ENCODE measurements at regions of chr16 and their contacts with region 1.

Region 1: DNA sequence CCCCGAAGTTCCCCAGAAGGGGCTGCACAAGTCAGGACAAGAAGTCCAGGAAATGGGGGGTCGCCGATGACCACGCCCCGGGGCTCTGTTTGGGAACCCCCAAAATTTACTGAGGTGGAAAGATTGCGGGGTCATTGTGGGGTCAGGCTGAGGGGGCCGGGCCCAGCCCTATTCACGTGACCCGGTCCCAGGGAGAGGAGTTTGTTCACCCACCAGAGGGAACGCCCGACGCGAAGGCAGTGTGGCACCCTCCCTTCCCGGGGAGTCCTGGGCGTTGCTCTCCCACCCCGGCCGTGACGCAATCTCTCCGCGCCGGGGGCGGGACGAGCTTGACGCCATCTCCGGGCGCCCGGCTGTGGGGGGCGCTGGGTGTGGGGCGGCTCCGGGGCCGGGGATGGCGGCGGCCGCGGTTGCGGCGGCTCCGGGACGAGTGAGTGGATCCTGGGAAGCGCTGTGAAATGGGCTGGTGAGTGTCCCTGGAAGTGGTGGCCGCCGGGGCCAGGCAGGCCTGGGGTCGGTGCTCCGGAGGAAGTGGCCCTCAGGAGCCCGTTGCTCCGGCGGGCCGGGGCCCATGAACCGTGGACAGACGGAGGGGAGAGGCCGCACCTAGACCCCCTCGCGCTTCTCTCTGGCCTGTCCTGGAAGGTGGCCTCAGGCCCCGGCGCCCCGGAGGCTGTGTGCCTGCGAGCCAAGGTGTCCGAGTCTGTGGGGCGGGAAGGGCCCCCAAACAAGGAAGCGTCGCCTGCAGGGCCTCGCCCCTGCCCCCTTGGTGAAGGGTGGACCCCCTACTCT is at the start of gene ATXN1L:
- DNase-seq: peak; percentile 70 to 97 (median 92)

Region 2: GRCh38 chr16:71894921-71895678 is 49.3 kb after region 1 on chr16 and contains the start of gene IST1:
- intact Hi-C with region 1: loop called (anchors 10 kb)
- DNase-seq: peak; percentile 95 to 99 (median 98)

Region 3: GRCh38 chr16:72050769-72051464 is 205.1 kb after region 1 on chr16:
- intact Hi-C with region 1: no loop called
- DNase-seq: no peak

Measured in head of caudate nucleus (tissue), 42 donors.